ENCODE measurements at regions of chr14 and their contacts with region 1.

Region 1: GRCh38 chr14:97707603-97708002 is 910.4 kb downstream of the VRK1 start:
- DNase-seq: peak in 1 of 9 donors; percentile 19
- ATAC-seq: peak; percentile 25
- H3K4me3 ChIP-seq: peak overlapping the region; percentile 7
- H3K4me3 Mint-ChIP-seq: peak overlapping the region in 9 of 10 donors; percentile 7 to 83 (median 52)
- H3K27ac ChIP-seq: no peak overlapping the region
- H3K27ac Mint-ChIP-seq: peak overlapping the region; percentile 26 to 96 (median 85)
- H3K4me1 ChIP-seq: peaks cover 81 to 85% of the 10 kb centered on the region in 2 donors
- H3K4me1 Mint-ChIP-seq: peaks cover 70 to 100% (median 98%) of the 10 kb centered on the region in 7 donors
- H3K27me3 ChIP-seq: no peaks in the 10 kb centered on the region
- H3K27me3 Mint-ChIP-seq: no peaks in the 10 kb centered on the region

Region 2: DNA sequence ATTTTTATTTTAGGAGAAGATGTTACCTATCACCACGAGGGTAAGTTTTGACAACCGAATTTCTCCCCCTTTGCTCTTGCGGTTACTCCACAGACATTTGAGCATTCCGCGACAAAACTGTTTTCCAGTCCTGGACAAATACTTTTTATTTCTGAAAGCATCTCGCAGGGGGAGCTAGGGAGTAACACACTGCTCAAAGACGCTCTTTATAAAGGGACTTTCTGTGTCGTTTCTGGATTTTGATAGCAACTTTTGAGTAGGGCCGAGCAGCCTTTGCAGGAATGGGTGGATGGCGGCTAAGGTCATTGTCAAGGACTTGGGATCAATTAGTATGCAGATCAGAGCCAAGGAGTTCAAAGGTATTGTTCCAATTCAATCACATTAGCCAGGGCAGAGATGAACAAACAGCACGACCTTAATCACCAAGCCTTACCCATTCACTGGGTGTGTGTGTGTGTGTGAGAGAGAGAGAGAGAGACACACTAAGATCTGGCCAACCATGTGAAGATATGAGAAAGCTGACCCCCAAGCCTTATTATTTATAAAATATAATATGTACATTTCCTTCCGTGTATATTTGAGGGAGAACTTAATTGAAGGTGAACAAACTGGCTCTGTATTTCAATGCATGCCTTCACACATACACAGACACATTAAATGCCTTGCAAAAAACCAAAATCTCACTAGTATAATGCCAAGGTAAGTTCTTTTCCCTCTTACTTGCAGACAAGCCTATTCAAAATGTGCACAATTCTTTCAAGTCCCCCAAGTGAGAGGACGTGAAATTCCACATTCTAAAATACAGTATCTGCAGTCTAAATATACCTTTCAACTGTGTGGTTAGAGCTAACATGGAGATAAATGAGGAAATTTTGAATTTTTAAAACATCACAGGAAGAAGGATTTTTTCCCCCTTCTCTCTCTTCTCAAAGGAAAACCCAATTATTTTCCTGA is 296.7 kb before region 1 on chr14:
- CTCF ChIA-PET with region 1: no interaction called
- POLR2A ChIA-PET with region 1: no interaction called
- intact Hi-C with region 1: loop called in 1 of 2 experiments (anchors 10 kb)
- DNase-seq: peak in 1 of 9 donors; percentile 9
- ATAC-seq: no peak
- H3K4me3 ChIP-seq: no peak overlapping the region
- H3K4me3 Mint-ChIP-seq: no peak overlapping the region
- H3K27ac ChIP-seq: no peak overlapping the region
- H3K27ac Mint-ChIP-seq: no peak overlapping the region
- H3K4me1 ChIP-seq: peaks cover 15 to 34% of the 10 kb centered on the region in 2 donors
- H3K4me1 Mint-ChIP-seq: peaks cover 0 to 30% (median 21%) of the 10 kb centered on the region in 7 donors
- H3K27me3 ChIP-seq: peaks cover 0 to 6% of the 10 kb centered on the region in 2 donors
- H3K27me3 Mint-ChIP-seq: peaks cover 0 to 11% (median 1%) of the 10 kb centered on the region in 5 donors

Region 3: DNA sequence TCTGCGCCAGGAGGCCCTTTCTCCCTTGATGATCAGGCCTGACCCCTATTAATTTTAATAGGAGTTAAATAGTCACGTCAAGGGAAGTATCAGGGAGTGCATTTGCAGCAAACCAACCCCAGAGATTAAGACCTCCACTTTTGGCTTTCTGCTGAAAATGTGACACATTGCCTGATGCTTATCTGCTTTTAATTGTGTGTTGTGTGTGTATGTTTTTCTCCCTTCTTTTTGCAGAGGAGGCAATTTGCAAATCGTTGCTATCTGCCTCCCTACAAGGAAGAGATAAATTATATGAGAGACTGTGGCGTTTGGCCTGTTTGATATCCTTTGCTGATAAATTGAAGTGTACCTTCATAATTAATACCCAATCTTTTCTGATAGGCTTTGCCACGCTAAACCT is 87.5 kb before region 1 on chr14:
- CTCF ChIA-PET with region 1: no interaction called
- POLR2A ChIA-PET with region 1: no interaction called
- intact Hi-C with region 1: loop called (anchors 5 kb)
- DNase-seq: peak in 1 of 9 donors; percentile 15
- ATAC-seq: no peak
- H3K4me3 ChIP-seq: peak overlapping the region; percentile 4
- H3K4me3 Mint-ChIP-seq: peak overlapping the region; percentile 72 to 95 (median 85)
- H3K27ac ChIP-seq: peak overlapping the region; percentile 76
- H3K27ac Mint-ChIP-seq: peak overlapping the region; percentile 95 to 100 (median 98)
- H3K4me1 ChIP-seq: peaks cover 37 to 38% of the 10 kb centered on the region in 2 donors
- H3K4me1 Mint-ChIP-seq: peaks cover 33 to 74% (median 58%) of the 10 kb centered on the region in 7 donors
- H3K27me3 ChIP-seq: no peaks in the 10 kb centered on the region
- H3K27me3 Mint-ChIP-seq: no peaks in the 10 kb centered on the region

Region 4: GRCh38 chr14:97718886-97719442 is 11.4 kb after region 1 on chr14:
- CTCF ChIA-PET with region 1: interaction called, 6 read pairs
- POLR2A ChIA-PET with region 1: interaction called, 33 read pairs
- intact Hi-C with region 1: loop called (anchors 1 to 2 kb)
- DNase-seq: no peak
- ATAC-seq: no peak
- H3K4me3 ChIP-seq: peak overlapping the region; percentile 9
- H3K4me3 Mint-ChIP-seq: peak overlapping the region; percentile 2 to 44 (median 26)
- H3K27ac ChIP-seq: peak overlapping the region; percentile 54
- H3K27ac Mint-ChIP-seq: peak overlapping the region; percentile 20 to 97 (median 83)
- H3K4me1 ChIP-seq: peaks cover 22 to 50% of the 10 kb centered on the region in 2 donors
- H3K4me1 Mint-ChIP-seq: peaks cover 38 to 59% (median 56%) of the 10 kb centered on the region in 7 donors
- H3K27me3 ChIP-seq: no peaks in the 10 kb centered on the region
- H3K27me3 Mint-ChIP-seq: no peaks in the 10 kb centered on the region

Region 5: DNA sequence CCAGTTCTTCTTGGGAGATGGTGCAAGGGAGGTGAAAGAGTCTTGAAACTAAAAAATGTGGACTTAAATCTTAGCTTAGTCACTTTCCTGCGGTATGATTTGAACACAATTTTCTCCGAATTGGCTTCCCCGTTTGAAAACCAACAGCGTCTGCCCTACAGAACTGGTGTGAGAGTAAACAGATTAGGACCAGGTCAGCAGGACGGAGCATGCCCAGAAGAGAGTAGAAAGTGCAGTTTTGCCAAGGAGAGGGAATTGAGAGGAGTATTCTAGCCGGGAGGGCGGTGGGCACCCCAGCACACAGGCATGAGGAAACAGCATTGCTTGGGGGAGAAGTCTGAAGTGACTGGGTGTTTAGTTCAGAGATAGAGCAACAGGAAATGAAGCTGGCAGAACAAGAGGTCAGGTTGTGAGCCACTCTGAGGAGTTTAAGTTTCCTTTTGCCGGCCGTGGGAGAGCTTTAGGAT is 16.7 kb after region 1 on chr14:
- CTCF ChIA-PET with region 1: interaction called, 6 read pairs
- POLR2A ChIA-PET with region 1: interaction called, 33 read pairs
- intact Hi-C with region 1: loop called (anchors 1 to 2 kb)
- DNase-seq: peak in 8 of 9 donors; percentile 38 to 67 (median 59)
- ATAC-seq: peak; percentile 77
- H3K4me3 ChIP-seq: peak overlapping the region; percentile 57
- H3K4me3 Mint-ChIP-seq: peak overlapping the region; percentile 78 to 92 (median 84)
- H3K27ac ChIP-seq: peak overlapping the region; percentile 80
- H3K27ac Mint-ChIP-seq: peak overlapping the region; percentile 92 to 99 (median 97)
- H3K4me1 ChIP-seq: peaks cover 28 to 72% of the 10 kb centered on the region in 2 donors
- H3K4me1 Mint-ChIP-seq: peaks cover 51 to 94% (median 86%) of the 10 kb centered on the region in 7 donors
- H3K27me3 ChIP-seq: no peaks in the 10 kb centered on the region
- H3K27me3 Mint-ChIP-seq: no peaks in the 10 kb centered on the region

Region 6: GRCh38 chr14:97788364-97788763 is 80.8 kb after region 1 on chr14:
- CTCF ChIA-PET with region 1: no interaction called
- POLR2A ChIA-PET with region 1: no interaction called
- intact Hi-C with region 1: loop called in 1 of 2 experiments (anchors 5 kb)
- DNase-seq: no peak
- ATAC-seq: no peak
- H3K4me3 ChIP-seq: no peak overlapping the region
- H3K4me3 Mint-ChIP-seq: no peak overlapping the region
- H3K27ac ChIP-seq: no peak overlapping the region
- H3K27ac Mint-ChIP-seq: peak overlapping the region in 2 of 9 donors; percentile 16 to 21
- H3K4me1 ChIP-seq: peaks cover 0 to 13% of the 10 kb centered on the region in 2 donors
- H3K4me1 Mint-ChIP-seq: peaks cover 8 to 38% (median 34%) of the 10 kb centered on the region in 7 donors
- H3K27me3 ChIP-seq: no peaks in the 10 kb centered on the region
- H3K27me3 Mint-ChIP-seq: no peaks in the 10 kb centered on the region

Measured in naive thymus-derived CD4-positive, alpha-beta T cell (primary cell).